Gastrocnemius medialis (tissue), 4 donors: ENCODE measurements at regions of chr4 and their contacts with region 1.

Region 1: DNA sequence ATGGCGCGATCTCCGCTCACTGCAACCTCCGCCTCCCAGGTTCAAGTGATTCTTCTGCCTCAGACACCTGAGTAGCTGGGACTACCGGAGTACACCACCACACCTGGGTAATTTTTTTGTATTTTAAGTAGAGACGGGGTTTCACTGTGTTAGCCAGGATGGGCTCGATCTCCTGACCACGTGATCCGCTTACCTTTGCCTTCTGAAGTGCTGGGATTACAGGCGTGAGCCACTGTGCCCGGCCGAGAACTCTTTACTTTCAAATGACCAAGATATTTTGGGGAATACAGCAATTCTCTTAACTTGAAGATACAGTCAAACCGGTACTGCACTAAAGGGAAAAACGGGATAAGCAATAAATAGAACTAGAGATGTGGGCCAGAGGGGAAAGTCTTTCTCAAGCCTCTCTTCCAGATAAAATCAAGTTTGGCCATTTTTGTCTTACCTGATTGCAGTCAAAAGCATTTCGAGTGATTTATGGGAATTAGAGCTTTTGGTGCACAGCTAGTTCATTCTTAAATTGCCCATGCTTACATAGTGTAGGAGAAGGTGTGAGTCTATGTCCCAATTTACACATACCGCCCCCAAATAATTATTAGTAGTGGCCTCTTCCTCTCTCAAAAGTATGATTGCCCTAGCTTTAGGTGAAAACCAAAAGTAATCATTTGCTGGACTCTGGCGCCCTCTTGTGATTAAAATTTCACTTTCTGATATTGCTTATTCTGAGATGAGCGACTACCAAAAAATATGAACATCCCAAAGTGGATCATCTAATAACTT is 53.2 kb upstream of the ABCG2 start:
- DNase-seq: no peak
- ATAC-seq: peak in 1 of 2 donors; percentile 78
- H3K4me3 ChIP-seq: no peak overlapping the region
- H3K27ac ChIP-seq: no peak overlapping the region
- H3K4me1 ChIP-seq: no peaks in the 10 kb centered on the region
- H3K27me3 ChIP-seq: no peaks in the 10 kb centered on the region
- CTCF ChIP-seq: peak; percentile 66 to 76 (median 73)
- POLR2A ChIP-seq: no peak

Region 2: DNA sequence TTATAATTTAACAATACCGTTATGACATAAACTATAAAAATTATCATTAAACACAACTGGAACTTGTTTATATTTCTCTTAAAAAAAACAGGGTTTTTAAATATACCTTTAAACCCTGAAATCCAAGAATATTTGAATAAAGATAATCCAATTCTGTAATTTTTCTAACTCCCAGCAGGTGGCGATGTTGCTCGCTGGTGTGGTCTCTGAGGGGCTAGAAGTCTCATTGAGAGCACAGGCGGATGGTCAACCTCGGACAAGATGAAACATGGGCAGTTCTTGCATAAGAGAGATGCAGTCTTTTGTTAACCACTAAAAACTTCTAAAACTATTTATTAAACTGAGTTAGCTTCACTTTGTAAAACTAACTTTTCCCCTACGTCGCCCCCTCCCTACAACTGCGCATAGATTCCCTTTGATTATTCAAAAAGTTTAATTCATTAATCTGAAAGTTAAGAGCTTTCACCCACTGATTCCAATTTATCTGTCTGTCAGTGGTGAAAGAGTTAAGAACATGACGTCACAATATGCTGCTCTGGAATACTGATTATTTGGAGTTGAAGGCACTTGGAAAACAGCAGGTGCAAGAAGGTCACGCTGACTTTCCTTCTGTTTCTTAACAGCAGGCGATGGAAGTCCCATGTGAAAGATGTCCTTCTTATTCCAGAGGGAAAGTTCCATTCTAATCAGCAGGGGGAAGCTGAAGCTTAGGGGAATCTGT is 532.1 kb before region 1 on chr4:
- in situ Hi-C with region 1: loop called (anchors 5 to 25 kb)
- intact Hi-C with region 1: no loop called
- DNase-seq: peak; percentile 31 to 34
- ATAC-seq: peak; percentile 81 to 82
- H3K4me3 ChIP-seq: no peak overlapping the region
- H3K27ac ChIP-seq: peak overlapping the region in 3 of 4 donors; percentile 37 to 52 (median 38)
- H3K4me1 ChIP-seq: peaks cover 0 to 10% of the 10 kb centered on the region in 2 donors
- H3K27me3 ChIP-seq: no peaks in the 10 kb centered on the region
- CTCF ChIP-seq: peak; percentile 21 to 72 (median 57)
- POLR2A ChIP-seq: no peak

Region 3: GRCh38 chr4:87856816-87857215 is 354.8 kb before region 1 on chr4:
- in situ Hi-C with region 1: loop called in 3 of 4 experiments (anchors 5 to 10 kb)
- intact Hi-C with region 1: loop called (anchors 2 kb)
- DNase-seq: no peak
- ATAC-seq: no peak
- H3K4me3 ChIP-seq: no peak overlapping the region
- H3K27ac ChIP-seq: no peak overlapping the region
- H3K4me1 ChIP-seq: no peaks in the 10 kb centered on the region
- H3K27me3 ChIP-seq: no peaks in the 10 kb centered on the region
- CTCF ChIP-seq: no peak
- POLR2A ChIP-seq: no peak

Region 4: DNA sequence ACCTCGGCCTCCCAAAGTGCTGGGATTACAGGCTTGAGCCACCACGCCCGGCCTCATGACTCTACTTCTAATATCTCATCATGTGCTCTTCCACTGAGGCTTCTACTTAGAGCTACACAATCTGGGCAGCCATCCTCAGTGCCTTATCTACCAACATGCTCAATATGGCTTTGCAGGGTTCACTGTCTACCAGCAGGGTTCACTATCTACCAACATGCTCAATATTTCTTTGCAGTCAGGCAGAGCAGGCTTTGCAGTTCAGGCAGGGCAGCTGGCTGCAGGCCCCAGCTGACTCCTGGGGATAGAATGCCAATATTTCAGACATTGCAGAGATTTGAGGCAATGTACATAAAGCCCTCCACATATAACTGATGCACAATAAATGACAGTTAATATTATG is 156.8 kb before region 1 on chr4:
- in situ Hi-C with region 1: no loop called
- intact Hi-C with region 1: loop called (anchors 1 kb)
- DNase-seq: no peak
- ATAC-seq: no peak
- H3K4me3 ChIP-seq: no peak overlapping the region
- H3K27ac ChIP-seq: no peak overlapping the region
- H3K4me1 ChIP-seq: no peaks in the 10 kb centered on the region
- H3K27me3 ChIP-seq: no peaks in the 10 kb centered on the region
- CTCF ChIP-seq: peak in 3 of 5 experiments; percentile 22 to 46 (median 26)
- POLR2A ChIP-seq: no peak

Region 5: GRCh38 chr4:88514557-88515511 is 303.2 kb after region 1 on chr4:
- in situ Hi-C with region 1: loop called in 2 of 4 experiments (anchors 5 kb)
- intact Hi-C with region 1: no loop called
- DNase-seq: no peak
- ATAC-seq: no peak
- H3K4me3 ChIP-seq: no peak overlapping the region
- H3K27ac ChIP-seq: no peak overlapping the region
- H3K4me1 ChIP-seq: no peaks in the 10 kb centered on the region
- H3K27me3 ChIP-seq: no peaks in the 10 kb centered on the region
- CTCF ChIP-seq: no peak
- POLR2A ChIP-seq: no peak